ENCODE measurements at regions of chr14 and their contacts with region 1.

Region 1: DNA sequence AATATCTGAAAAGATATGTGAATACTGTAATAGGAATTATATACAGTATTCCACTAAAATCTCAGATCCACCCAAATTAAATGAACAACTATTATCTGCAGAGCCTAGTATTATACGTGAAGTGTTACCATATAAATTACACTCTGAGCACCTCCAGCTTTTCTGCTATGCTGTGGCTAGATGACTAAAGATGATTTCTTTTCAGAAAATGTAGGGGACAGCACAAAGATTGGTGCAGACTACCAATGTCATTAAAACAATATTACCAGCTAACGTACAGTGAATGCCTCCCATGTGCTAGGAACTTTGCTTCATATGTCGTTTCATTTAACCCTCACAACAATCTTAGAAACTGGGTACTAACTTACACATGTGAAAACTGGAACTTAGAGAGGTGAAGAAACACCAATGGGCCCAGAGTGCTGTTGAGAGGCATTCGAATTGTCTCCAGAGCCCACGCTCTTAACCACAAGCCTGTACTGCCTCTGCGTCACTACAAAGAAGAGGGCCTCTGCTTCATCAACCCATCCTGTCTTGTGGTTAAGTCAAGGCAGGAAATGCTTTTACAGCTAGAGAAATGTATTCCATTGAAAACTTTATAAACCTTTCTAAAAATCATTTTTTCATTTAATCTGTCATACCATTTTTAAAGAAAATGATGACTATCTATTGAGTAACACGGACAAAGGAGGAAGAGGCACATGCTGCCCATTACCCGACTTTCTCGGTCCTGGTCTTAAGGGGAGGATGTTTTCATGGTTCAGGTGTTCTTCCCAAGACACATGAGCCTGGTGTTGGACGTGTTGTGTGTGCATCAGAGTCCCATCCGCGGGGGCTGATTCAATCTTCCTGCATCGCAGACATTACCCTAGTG is 1.3 kb downstream of the GPR65 start:
- DNase-seq: peak; percentile 83
- H3K4me3 Mint-ChIP-seq: peak overlapping the region; percentile 73
- H3K27ac Mint-ChIP-seq: peak overlapping the region; percentile 87
- H3K4me1 Mint-ChIP-seq: peaks cover 59% of the 10 kb centered on the region
- H3K27me3 Mint-ChIP-seq: no peaks in the 10 kb centered on the region

Region 2: DNA sequence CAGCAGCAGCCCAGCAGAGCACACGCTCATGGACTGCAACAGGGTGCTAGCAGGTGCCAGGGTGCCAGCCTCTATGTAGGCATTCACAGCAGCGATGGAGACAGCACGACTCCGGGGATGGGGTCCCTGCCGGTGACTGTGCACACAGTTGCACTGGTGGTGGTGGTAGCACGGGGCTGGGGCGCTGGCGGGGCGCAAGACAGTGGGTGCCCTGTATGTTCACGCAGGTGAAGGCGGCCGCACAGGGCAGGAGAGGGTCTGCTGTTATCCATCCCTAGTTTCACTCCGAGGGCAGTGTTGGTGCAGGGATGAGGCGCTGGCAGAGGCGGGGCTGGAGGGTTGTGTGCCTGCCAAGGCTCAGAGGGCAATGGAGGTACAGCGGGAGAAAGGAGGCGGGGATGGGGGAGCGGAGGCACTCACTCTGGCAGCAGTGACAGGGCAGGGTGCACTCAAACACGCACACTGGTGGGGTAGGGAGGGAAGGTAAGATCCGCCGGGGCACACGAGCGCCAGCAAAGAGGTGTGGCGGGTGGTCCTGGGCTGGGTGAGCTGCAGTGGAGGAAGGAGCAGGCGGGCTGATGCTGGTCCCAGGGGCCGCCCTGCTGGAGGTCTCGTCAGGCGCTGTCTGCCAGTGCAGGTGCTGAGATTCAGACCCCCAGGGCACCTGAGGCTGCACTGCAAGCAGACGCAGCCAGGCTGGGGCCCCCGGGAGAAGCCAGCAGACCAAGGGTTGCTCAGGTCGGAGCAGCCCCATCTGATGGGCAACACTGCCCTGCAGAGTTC is 89.9 kb before region 1 on chr14:
- CTCF ChIA-PET with region 1: no interaction called
- POLR2A ChIA-PET with region 1: no interaction called
- intact Hi-C with region 1: no loop called
- DNase-seq: no peak
- H3K4me3 Mint-ChIP-seq: no peak overlapping the region
- H3K27ac Mint-ChIP-seq: no peak overlapping the region
- H3K4me1 Mint-ChIP-seq: no peaks in the 10 kb centered on the region
- H3K27me3 Mint-ChIP-seq: no peaks in the 10 kb centered on the region

Region 3: DNA sequence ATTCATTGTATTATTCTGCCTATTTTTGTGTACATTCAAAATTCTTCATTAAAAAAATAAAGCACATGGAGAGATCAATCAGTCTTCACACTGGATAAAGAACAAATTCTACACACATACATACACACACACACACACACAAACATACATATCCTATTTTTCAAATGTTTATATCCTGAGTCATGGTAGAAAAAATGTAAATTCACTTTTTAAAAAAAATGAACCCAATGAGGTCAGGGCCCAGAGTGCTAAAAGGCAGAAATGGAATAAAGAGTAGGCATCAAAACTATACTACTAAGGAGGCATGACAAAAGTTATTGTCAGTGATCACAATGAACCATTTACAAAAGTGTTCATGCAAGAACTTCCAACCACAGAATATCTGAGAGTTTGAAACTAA is 30.6 kb before region 1 on chr14:
- CTCF ChIA-PET with region 1: no interaction called
- POLR2A ChIA-PET with region 1: no interaction called
- intact Hi-C with region 1: no loop called
- DNase-seq: no peak
- H3K4me3 Mint-ChIP-seq: no peak overlapping the region
- H3K27ac Mint-ChIP-seq: no peak overlapping the region
- H3K4me1 Mint-ChIP-seq: no peaks in the 10 kb centered on the region
- H3K27me3 Mint-ChIP-seq: no peaks in the 10 kb centered on the region

Region 4: GRCh38 chr14:87992718-87993628 is 13.2 kb before region 1 on chr14 and contains the start of gene GALC:
- CTCF ChIA-PET with region 1: interaction called, 20 read pairs
- POLR2A ChIA-PET with region 1: interaction called, 88 read pairs
- intact Hi-C with region 1: loop called (anchors 1 kb)
- DNase-seq: peak; percentile 98
- H3K4me3 Mint-ChIP-seq: peak within 1 kb of the TSS; percentile 93
- H3K27ac Mint-ChIP-seq: peak within 1 kb of the TSS; percentile 96
- H3K4me1 Mint-ChIP-seq: peaks cover 43% of the 10 kb centered on the region
- H3K27me3 Mint-ChIP-seq: no peaks in the 10 kb centered on the region
- total RNA-seq, gene GALC: 14.4 to 14.7 TPM

Region 5: DNA sequence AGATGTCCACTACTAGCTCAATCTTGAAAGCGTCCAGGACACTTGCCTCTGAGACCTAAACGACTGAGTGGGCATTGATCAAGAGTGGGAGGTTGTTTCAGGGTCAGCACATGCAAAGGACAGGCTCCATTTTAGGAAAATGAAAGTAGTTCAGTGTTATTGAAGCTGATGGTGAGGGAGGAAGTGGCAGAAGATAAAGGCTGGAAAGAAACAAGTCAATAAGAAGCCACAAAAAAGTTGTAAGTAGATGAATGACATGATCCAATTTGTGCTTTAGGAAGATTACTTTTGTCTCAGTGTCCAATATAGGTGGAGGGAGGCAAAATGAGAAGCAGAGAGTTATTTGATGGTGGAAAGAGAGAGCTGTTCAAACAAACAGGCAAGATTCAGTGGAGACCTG is 20.7 kb after region 1 on chr14:
- CTCF ChIA-PET with region 1: no interaction called
- POLR2A ChIA-PET with region 1: interaction called, 3 read pairs
- intact Hi-C with region 1: loop called (anchors 1 kb)
- DNase-seq: no peak
- H3K4me3 Mint-ChIP-seq: no peak overlapping the region
- H3K27ac Mint-ChIP-seq: peak overlapping the region; percentile 10
- H3K4me1 Mint-ChIP-seq: peaks cover 72% of the 10 kb centered on the region
- H3K27me3 Mint-ChIP-seq: no peaks in the 10 kb centered on the region

Region 6: GRCh38 chr14:88044851-88045339 is 38.7 kb after region 1 on chr14:
- CTCF ChIA-PET with region 1: no interaction called
- POLR2A ChIA-PET with region 1: interaction called, 3 read pairs
- intact Hi-C with region 1: loop called (anchors 1 kb)
- DNase-seq: peak; percentile 18
- H3K4me3 Mint-ChIP-seq: no peak overlapping the region
- H3K27ac Mint-ChIP-seq: peak overlapping the region; percentile 77
- H3K4me1 Mint-ChIP-seq: peaks cover 15% of the 10 kb centered on the region
- H3K27me3 Mint-ChIP-seq: no peaks in the 10 kb centered on the region

Region 7: DNA sequence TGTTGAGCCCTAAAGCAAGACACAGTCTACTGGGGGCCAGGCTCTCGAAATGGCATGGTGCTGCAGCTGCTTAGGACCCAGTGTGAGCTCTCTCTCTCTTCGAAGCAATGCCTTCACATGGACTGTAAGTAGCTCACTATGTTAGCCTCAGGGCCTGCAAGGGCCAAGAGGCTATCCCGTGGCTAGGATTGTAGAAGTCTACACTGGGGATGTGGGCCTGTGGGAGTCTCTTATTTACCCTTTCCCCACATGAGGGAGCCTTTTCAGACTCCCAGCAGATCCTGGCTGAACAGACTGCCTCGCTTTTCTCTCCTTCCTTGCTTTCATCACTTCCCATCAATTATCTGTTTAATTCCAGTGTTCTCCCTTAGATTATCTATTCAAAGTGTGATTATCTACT is 100.2 kb after region 1 on chr14:
- CTCF ChIA-PET with region 1: no interaction called
- POLR2A ChIA-PET with region 1: no interaction called
- intact Hi-C with region 1: no loop called
- DNase-seq: no peak
- H3K4me3 Mint-ChIP-seq: no peak overlapping the region
- H3K27ac Mint-ChIP-seq: no peak overlapping the region
- H3K4me1 Mint-ChIP-seq: no peaks in the 10 kb centered on the region
- H3K27me3 Mint-ChIP-seq: peaks cover 1% of the 10 kb centered on the region

Region 8: GRCh38 chr14:88385345-88386101 is 379.3 kb after region 1 on chr14 and contains the start of gene SPATA7:
- CTCF ChIA-PET with region 1: no interaction called
- POLR2A ChIA-PET with region 1: no interaction called
- intact Hi-C with region 1: loop called (anchors 10 kb)
- DNase-seq: peak; percentile 90
- H3K4me3 Mint-ChIP-seq: peak within 1 kb of the TSS; percentile 95
- H3K27ac Mint-ChIP-seq: peak within 1 kb of the TSS; percentile 76
- H3K4me1 Mint-ChIP-seq: peaks cover 14% of the 10 kb centered on the region
- H3K27me3 Mint-ChIP-seq: no peaks in the 10 kb centered on the region
- total RNA-seq, gene SPATA7: 4.2 to 4.5 TPM

Region 9: GRCh38 chr14:88562831-88563686 is 556.8 kb after region 1 on chr14 and contains the start of gene ZC3H14:
- CTCF ChIA-PET with region 1: no interaction called
- POLR2A ChIA-PET with region 1: no interaction called
- intact Hi-C with region 1: loop called (anchors 5 kb)
- DNase-seq: peak; percentile 90
- H3K4me3 Mint-ChIP-seq: peak within 1 kb of the TSS; percentile 94
- H3K27ac Mint-ChIP-seq: peak within 1 kb of the TSS; percentile 87
- H3K4me1 Mint-ChIP-seq: peaks cover 28% of the 10 kb centered on the region
- H3K27me3 Mint-ChIP-seq: peaks cover 7% of the 10 kb centered on the region
- total RNA-seq, gene ZC3H14: 43.7 to 45.2 TPM

Region 10: DNA sequence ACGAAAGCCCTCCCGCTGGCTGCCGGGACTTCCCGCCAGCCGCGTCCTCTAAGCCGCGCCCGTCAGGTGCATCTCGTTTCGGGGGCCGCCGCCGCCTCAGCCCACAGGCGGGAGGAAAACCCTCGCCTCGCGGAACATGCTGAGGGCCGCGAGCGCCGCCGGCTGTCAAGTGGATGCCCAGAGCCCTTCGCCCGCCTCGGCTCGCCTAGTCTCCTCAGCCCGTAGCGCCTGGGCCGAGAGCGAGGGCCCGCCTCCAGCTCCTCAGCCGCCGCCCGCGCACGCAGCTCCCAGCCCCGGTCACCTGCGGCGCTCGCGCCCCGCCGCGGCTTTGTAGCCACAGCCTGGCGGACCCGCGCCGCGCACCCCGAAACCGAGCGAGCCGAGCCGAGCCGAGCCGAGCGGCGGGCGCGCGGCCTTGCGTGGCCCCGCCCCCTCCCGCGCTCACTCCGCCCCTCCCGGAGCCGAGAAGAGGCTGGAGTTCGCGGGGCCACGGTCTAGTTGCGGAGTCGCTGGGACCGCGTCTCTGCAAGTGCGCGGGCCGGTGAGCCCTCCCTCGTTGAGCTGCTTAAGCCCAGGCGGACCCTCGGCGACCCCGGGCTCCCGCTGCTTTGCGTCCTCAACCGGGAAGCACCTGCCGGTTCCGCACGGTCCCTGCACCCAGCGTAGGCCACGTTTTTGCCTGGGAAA is 786.5 kb after region 1 on chr14 and contains the start of gene EML5:
- CTCF ChIA-PET with region 1: no interaction called
- POLR2A ChIA-PET with region 1: no interaction called
- intact Hi-C with region 1: loop called (anchors 5 kb)
- DNase-seq: peak; percentile 87
- H3K4me3 Mint-ChIP-seq: peak within 1 kb of the TSS; percentile 89
- H3K27ac Mint-ChIP-seq: peak within 1 kb of the TSS; percentile 74
- H3K4me1 Mint-ChIP-seq: peaks cover 25% of the 10 kb centered on the region
- H3K27me3 Mint-ChIP-seq: peaks cover 3% of the 10 kb centered on the region
- total RNA-seq, gene EML5: 5.7 to 6.2 TPM